ENCODE measurements at regions of chr14 and their contacts with region 1.

Region 1: GRCh38 chr14:99537399-99537798 is 56.2 kb downstream of the CCNK start:
- DNase-seq: no peak
- H3K4me3 ChIP-seq: no peak overlapping the region
- H3K27ac ChIP-seq: no peak overlapping the region
- H3K4me1 ChIP-seq: peaks cover 0 to 38% (median 20%) of the 10 kb centered on the region in 4 experiments; a peak in 6 of 7 replicates
- H3K27me3 ChIP-seq: no peaks in the 10 kb centered on the region
- CTCF ChIP-seq: no peak
- EP300 ChIP-seq: no peak
- POLR2A ChIP-seq: no peak
- RAD21 ChIP-seq: no peak

Region 2: GRCh38 chr14:99554184-99554583 is 16.8 kb after region 1 on chr14:
- CTCF ChIA-PET with region 1: interaction called, 19 read pairs
- POLR2A ChIA-PET with region 1: interaction called, 3 read pairs
- DNase-seq: no peak
- H3K4me3 ChIP-seq: no peak overlapping the region
- H3K27ac ChIP-seq: no peak overlapping the region
- H3K4me1 ChIP-seq: peaks cover 0 to 7% (median 5%) of the 10 kb centered on the region in 4 experiments; a peak in 5 of 7 replicates
- H3K27me3 ChIP-seq: no peaks in the 10 kb centered on the region
- CTCF ChIP-seq: no peak
- EP300 ChIP-seq: no peak
- POLR2A ChIP-seq: no peak
- RAD21 ChIP-seq: no peak